MCF 10A (cell line): ENCODE measurements at regions of chr1 and their contacts with region 1.

Region 1: DNA sequence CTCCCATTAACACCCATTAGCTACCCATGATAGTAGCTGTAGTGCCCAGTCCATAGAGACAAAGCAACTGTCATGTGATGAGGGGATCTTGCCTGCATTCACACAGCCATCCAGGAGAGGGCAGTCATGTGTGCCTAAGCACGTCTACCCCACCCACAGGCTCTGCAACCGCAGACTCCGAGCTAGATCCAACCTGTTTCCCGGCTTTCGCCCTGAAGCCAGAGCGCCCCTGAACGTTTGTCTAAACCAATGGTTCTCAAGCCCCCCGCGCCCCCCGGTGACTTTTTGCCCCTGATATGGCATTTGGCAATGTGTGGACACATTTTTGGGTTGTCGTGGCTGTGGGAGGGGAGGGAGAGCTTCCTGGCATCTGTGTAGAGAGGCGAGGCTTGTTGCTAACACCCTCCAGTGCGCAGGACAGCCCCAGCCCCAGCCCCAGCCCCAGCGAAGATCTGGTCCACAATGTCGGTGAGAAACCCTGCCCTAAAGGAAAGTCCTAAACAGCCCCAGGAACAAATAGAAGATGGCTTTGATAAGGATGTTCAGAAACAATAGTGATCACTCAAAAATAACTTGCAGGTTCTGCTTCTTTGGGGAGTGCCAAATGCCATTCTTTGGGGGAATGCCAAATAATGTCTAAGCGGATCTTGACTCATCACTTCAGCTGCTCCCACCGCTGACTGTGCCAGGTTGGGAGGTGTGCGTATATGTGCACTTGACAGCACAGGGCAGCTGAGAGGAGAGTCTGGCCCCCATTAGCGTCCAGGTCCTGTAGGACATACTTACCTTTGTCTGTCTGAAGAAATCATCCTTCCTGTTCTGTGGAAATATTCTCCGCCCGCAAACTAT is 34.5 kb downstream of the SLC44A3 start:
- DNase-seq: peak; percentile 97
- H3K4me3 Mint-ChIP-seq: no peak overlapping the region
- H3K27ac Mint-ChIP-seq: no peak overlapping the region
- H3K4me1 Mint-ChIP-seq: peaks cover 6% of the 10 kb centered on the region
- H3K27me3 Mint-ChIP-seq: no peaks in the 10 kb centered on the region
- CTCF ChIP-seq: peak; percentile 82

Region 2: GRCh38 chr1:94832446-94832845 is 22.2 kb before region 1 on chr1:
- CTCF ChIA-PET with region 1: interaction called, 40 read pairs
- POLR2A ChIA-PET with region 1: interaction called, 3 read pairs
- intact Hi-C with region 1: no loop called
- DNase-seq: peak; percentile 28
- H3K4me3 Mint-ChIP-seq: no peak overlapping the region
- H3K27ac Mint-ChIP-seq: no peak overlapping the region
- H3K4me1 Mint-ChIP-seq: no peaks in the 10 kb centered on the region
- H3K27me3 Mint-ChIP-seq: no peaks in the 10 kb centered on the region
- CTCF ChIP-seq: no peak

Region 3: GRCh38 chr1:94840811-94841210 is 13.9 kb before region 1 on chr1:
- CTCF ChIA-PET with region 1: interaction called, 40 read pairs
- POLR2A ChIA-PET with region 1: no interaction called
- intact Hi-C with region 1: no loop called
- DNase-seq: no peak
- H3K4me3 Mint-ChIP-seq: no peak overlapping the region
- H3K27ac Mint-ChIP-seq: no peak overlapping the region
- H3K4me1 Mint-ChIP-seq: no peaks in the 10 kb centered on the region
- H3K27me3 Mint-ChIP-seq: no peaks in the 10 kb centered on the region
- CTCF ChIP-seq: no peak

Region 4: DNA sequence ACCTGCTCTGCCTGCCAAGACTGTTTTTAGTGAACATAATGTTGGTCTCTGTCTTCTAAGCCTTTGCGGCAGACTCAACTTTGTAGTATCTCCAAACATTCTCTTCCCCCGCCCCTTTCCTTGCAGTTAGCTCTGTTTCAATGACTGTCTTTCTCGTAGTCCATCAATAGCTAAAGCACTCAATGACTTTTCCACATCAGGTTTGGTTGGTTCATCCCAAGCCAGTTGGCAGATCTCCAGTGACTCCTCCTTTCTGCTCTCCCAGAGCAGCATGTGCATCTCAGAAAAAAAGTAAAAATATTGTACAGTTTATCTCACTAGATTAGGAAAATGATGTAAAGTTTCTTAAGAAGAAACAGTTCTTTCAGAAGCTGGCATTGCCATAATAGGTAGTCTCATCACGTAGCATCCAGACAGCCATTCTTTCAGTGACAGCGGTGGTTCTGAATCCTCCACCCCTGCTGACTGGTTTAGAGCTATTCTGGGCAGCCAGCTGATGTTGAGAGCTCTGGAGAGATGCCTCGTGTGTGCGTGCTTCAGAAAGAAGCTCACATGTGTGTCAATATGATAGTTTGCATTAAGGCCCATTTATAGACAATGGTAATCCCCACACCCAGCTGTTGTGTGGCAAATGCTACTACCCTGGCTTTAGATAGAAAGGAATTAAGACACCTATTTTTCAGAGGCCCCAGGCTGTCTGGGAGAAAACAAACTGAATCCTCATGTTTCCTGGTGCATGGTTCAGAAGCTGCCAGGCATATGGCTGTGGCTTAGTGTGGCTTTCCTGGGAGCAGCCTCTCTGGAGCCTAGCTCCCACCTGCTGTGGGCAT is 19.1 kb after region 1 on chr1:
- CTCF ChIA-PET with region 1: interaction called, 26 read pairs
- POLR2A ChIA-PET with region 1: interaction called, 91 read pairs
- intact Hi-C with region 1: no loop called
- DNase-seq: no peak
- H3K4me3 Mint-ChIP-seq: no peak overlapping the region
- H3K27ac Mint-ChIP-seq: no peak overlapping the region
- H3K4me1 Mint-ChIP-seq: peaks cover 23% of the 10 kb centered on the region
- H3K27me3 Mint-ChIP-seq: no peaks in the 10 kb centered on the region
- CTCF ChIP-seq: no peak

Region 5: GRCh38 chr1:94901841-94902240 is 47.2 kb after region 1 on chr1:
- CTCF ChIA-PET with region 1: interaction called, 14 read pairs
- POLR2A ChIA-PET with region 1: no interaction called
- intact Hi-C with region 1: no loop called
- DNase-seq: no peak
- H3K4me3 Mint-ChIP-seq: no peak overlapping the region
- H3K27ac Mint-ChIP-seq: no peak overlapping the region
- H3K4me1 Mint-ChIP-seq: peaks cover 7% of the 10 kb centered on the region
- H3K27me3 Mint-ChIP-seq: no peaks in the 10 kb centered on the region
- CTCF ChIP-seq: no peak

Region 6: DNA sequence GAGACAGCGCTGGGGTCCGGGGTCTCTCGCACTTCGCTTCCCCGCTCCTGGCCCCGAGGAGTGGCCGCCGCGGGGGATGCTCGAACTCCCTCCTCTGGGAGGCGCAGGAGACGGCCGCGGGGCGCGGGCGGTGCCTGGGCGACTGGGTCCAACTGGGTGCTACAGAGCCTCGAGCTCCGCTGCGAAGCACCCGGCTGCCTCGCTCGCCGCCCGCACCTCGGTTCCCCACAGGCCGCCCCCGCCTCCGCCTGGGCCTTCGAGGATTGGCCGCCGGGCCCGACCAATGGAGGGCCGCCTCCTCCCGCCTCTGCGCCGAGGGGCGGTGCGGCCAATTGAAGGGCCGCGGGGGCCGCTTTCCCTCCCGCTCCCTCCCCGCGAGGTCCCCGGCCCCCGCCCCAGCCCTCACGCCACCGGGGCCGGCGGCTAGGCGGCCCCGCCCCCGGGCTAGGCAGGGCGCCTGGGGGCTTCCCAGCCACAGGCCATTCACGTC is 72.3 kb after region 1 on chr1 and contains the start of gene CNN3:
- CTCF ChIA-PET with region 1: interaction called, 14 read pairs
- POLR2A ChIA-PET with region 1: interaction called, 11 read pairs
- intact Hi-C with region 1: loop called (anchors 1 kb)
- DNase-seq: peak; percentile 85
- H3K4me3 Mint-ChIP-seq: peak within 1 kb of the TSS; percentile 97
- H3K27ac Mint-ChIP-seq: peak within 1 kb of the TSS; percentile 69
- H3K4me1 Mint-ChIP-seq: peaks cover 22% of the 10 kb centered on the region
- H3K27me3 Mint-ChIP-seq: no peaks in the 10 kb centered on the region
- CTCF ChIP-seq: no peak
- total RNA-seq, gene CNN3: 44.5 and 48.2 TPM in 2 replicates

Region 7: GRCh38 chr1:95023399-95024043 is 168.8 kb after region 1 on chr1:
- CTCF ChIA-PET with region 1: interaction called, 42 read pairs
- POLR2A ChIA-PET with region 1: interaction called, 3 read pairs
- intact Hi-C with region 1: no loop called
- DNase-seq: peak; percentile 61
- H3K4me3 Mint-ChIP-seq: no peak overlapping the region
- H3K27ac Mint-ChIP-seq: peak overlapping the region; percentile 39
- H3K4me1 Mint-ChIP-seq: peaks cover 18% of the 10 kb centered on the region
- H3K27me3 Mint-ChIP-seq: no peaks in the 10 kb centered on the region
- CTCF ChIP-seq: no peak

Region 8: DNA sequence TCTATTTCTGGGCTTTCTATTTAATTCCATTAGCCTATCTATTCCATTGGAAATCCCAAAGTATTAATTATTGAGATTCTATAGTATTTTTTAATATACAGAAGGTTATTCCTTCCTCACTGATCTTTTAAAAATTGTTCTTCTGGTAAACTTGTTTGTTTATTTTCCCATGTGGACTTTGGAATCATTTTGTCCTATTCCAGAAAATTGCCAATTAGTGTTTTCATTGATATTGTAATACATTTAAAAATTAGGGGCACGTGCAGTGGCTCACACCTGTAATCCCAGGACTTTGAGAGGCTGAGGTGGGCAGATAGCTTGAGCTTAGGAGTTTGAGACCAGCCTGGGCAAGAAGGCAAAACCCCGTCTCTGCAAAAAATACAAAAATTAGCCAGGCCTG is 254.1 kb after region 1 on chr1:
- CTCF ChIA-PET with region 1: no interaction called
- POLR2A ChIA-PET with region 1: no interaction called
- intact Hi-C with region 1: no loop called
- DNase-seq: no peak
- H3K4me3 Mint-ChIP-seq: no peak overlapping the region
- H3K27ac Mint-ChIP-seq: no peak overlapping the region
- H3K4me1 Mint-ChIP-seq: no peaks in the 10 kb centered on the region
- H3K27me3 Mint-ChIP-seq: no peaks in the 10 kb centered on the region
- CTCF ChIP-seq: no peak